ENCODE measurements at regions of chr3 and their contacts with region 1.

Region 1: DNA sequence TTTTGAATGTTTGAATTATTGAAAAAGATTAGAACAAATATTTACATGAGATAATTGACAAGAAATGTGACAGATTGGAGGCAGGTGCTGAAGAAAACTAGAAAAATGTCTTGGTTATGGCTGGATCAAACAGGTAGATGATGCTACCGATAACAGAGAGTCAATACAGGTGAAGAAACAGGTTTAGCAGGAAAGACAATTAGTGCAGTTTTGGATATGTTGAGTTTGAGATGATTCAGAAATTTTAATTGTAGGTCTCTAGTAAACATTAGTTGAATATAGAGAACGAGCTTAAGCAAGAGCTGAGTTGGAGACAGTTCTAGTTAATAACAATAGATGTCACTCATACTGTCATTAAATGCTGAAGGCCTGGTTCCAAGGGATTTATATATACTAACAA is 524.4 kb downstream of the NSUN3 start:
- DNase-seq: peak; percentile 29 to 67
- H3K4me3 ChIP-seq: no peak overlapping the region
- H3K4me3 Mint-ChIP-seq: peak overlapping the region; percentile 3
- H3K27ac Mint-ChIP-seq: peak overlapping the region; percentile 87
- H3K4me1 ChIP-seq: peaks cover 25% of the 10 kb centered on the region
- H3K4me1 Mint-ChIP-seq: peaks cover 29% of the 10 kb centered on the region
- H3K27me3 ChIP-seq: no peaks in the 10 kb centered on the region
- H3K27me3 Mint-ChIP-seq: no peaks in the 10 kb centered on the region
- CTCF ChIP-seq: no peak

Region 2: GRCh38 chr3:94305835-94306611 is 281.2 kb before region 1 on chr3:
- CTCF ChIA-PET with region 1: no interaction called
- POLR2A ChIA-PET with region 1: no interaction called
- intact Hi-C with region 1: loop called (anchors 1 kb)
- DNase-seq: peak; percentile 54 to 68
- H3K4me3 ChIP-seq: no peak overlapping the region
- H3K4me3 Mint-ChIP-seq: peak overlapping the region; percentile 46
- H3K27ac Mint-ChIP-seq: peak overlapping the region; percentile 28
- H3K4me1 ChIP-seq: peaks cover 29% of the 10 kb centered on the region
- H3K4me1 Mint-ChIP-seq: peaks cover 6% of the 10 kb centered on the region
- H3K27me3 ChIP-seq: no peaks in the 10 kb centered on the region
- H3K27me3 Mint-ChIP-seq: no peaks in the 10 kb centered on the region
- CTCF ChIP-seq: no peak

Region 3: DNA sequence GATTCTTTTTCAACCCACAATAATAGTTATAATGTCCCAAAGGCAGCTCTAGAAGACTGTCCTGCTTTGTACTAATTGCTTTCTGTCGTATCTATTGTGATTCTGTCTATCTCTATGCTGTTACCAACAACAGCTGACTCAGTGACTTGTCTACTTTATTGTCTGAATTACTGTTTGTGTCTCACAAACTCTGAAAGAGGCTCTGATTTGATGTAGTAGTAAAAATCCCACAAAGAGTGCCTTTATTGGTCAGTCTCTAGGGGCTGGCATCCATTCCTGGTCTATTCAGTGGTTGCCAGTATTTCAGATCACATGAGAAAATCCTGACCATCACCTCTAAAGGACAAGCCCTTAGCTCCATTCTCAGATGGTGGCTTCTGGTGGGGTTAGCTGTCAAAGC is 270.2 kb before region 1 on chr3:
- CTCF ChIA-PET with region 1: no interaction called
- POLR2A ChIA-PET with region 1: no interaction called
- intact Hi-C with region 1: no loop called
- DNase-seq: no peak
- H3K4me3 ChIP-seq: no peak overlapping the region
- H3K4me3 Mint-ChIP-seq: no peak overlapping the region
- H3K27ac Mint-ChIP-seq: no peak overlapping the region
- H3K4me1 ChIP-seq: no peaks in the 10 kb centered on the region
- H3K4me1 Mint-ChIP-seq: no peaks in the 10 kb centered on the region
- H3K27me3 ChIP-seq: no peaks in the 10 kb centered on the region
- H3K27me3 Mint-ChIP-seq: no peaks in the 10 kb centered on the region
- CTCF ChIP-seq: no peak

Region 4: GRCh38 chr3:94440767-94441493 is 146.3 kb before region 1 on chr3:
- CTCF ChIA-PET with region 1: no interaction called
- POLR2A ChIA-PET with region 1: no interaction called
- intact Hi-C with region 1: loop called (anchors 1 kb)
- DNase-seq: peak in 1 of 2 experiments; percentile 4
- H3K4me3 ChIP-seq: no peak overlapping the region
- H3K4me3 Mint-ChIP-seq: no peak overlapping the region
- H3K27ac Mint-ChIP-seq: peak overlapping the region; percentile 78
- H3K4me1 ChIP-seq: peaks cover 48% of the 10 kb centered on the region
- H3K4me1 Mint-ChIP-seq: peaks cover 19% of the 10 kb centered on the region
- H3K27me3 ChIP-seq: no peaks in the 10 kb centered on the region
- H3K27me3 Mint-ChIP-seq: no peaks in the 10 kb centered on the region
- CTCF ChIP-seq: no peak

Region 5: GRCh38 chr3:94544131-94544655 is 43.1 kb before region 1 on chr3:
- CTCF ChIA-PET with region 1: no interaction called
- POLR2A ChIA-PET with region 1: no interaction called
- intact Hi-C with region 1: loop called (anchors 1 kb)
- DNase-seq: peak in 1 of 2 experiments; percentile 29
- H3K4me3 ChIP-seq: no peak overlapping the region
- H3K4me3 Mint-ChIP-seq: peak overlapping the region; percentile 45
- H3K27ac Mint-ChIP-seq: peak overlapping the region; percentile 66
- H3K4me1 ChIP-seq: peaks cover 30% of the 10 kb centered on the region
- H3K4me1 Mint-ChIP-seq: peaks cover 20% of the 10 kb centered on the region
- H3K27me3 ChIP-seq: no peaks in the 10 kb centered on the region
- H3K27me3 Mint-ChIP-seq: no peaks in the 10 kb centered on the region
- CTCF ChIP-seq: no peak

Region 6: GRCh38 chr3:94616821-94617220 is 29.6 kb after region 1 on chr3:
- CTCF ChIA-PET with region 1: no interaction called
- POLR2A ChIA-PET with region 1: no interaction called
- intact Hi-C with region 1: loop called (anchors 2 kb)
- DNase-seq: peak in 1 of 2 experiments; percentile 11
- H3K4me3 ChIP-seq: no peak overlapping the region
- H3K4me3 Mint-ChIP-seq: no peak overlapping the region
- H3K27ac Mint-ChIP-seq: peak overlapping the region; percentile 26
- H3K4me1 ChIP-seq: peaks cover 13% of the 10 kb centered on the region; the same call in 1 of the 2 replicates
- H3K4me1 Mint-ChIP-seq: peaks cover 16% of the 10 kb centered on the region
- H3K27me3 ChIP-seq: no peaks in the 10 kb centered on the region
- H3K27me3 Mint-ChIP-seq: no peaks in the 10 kb centered on the region
- CTCF ChIP-seq: no peak

Region 7: GRCh38 chr3:94875149-94875548 is 287.9 kb after region 1 on chr3:
- CTCF ChIA-PET with region 1: no interaction called
- POLR2A ChIA-PET with region 1: no interaction called
- intact Hi-C with region 1: no loop called
- DNase-seq: no peak
- H3K4me3 ChIP-seq: no peak overlapping the region
- H3K4me3 Mint-ChIP-seq: no peak overlapping the region
- H3K27ac Mint-ChIP-seq: no peak overlapping the region
- H3K4me1 ChIP-seq: no peaks in the 10 kb centered on the region
- H3K4me1 Mint-ChIP-seq: no peaks in the 10 kb centered on the region
- H3K27me3 ChIP-seq: no peaks in the 10 kb centered on the region
- H3K27me3 Mint-ChIP-seq: no peaks in the 10 kb centered on the region
- CTCF ChIP-seq: no peak

Region 8: GRCh38 chr3:94961446-94962080 is 374.3 kb after region 1 on chr3:
- CTCF ChIA-PET with region 1: no interaction called
- POLR2A ChIA-PET with region 1: no interaction called
- intact Hi-C with region 1: loop called (anchors 1 kb)
- DNase-seq: peak; percentile 70 to 76
- H3K4me3 ChIP-seq: no peak overlapping the region
- H3K4me3 Mint-ChIP-seq: peak overlapping the region; percentile 9
- H3K27ac Mint-ChIP-seq: peak overlapping the region; percentile 67
- H3K4me1 ChIP-seq: peaks cover 32% of the 10 kb centered on the region
- H3K4me1 Mint-ChIP-seq: peaks cover 10% of the 10 kb centered on the region
- H3K27me3 ChIP-seq: no peaks in the 10 kb centered on the region
- H3K27me3 Mint-ChIP-seq: no peaks in the 10 kb centered on the region
- CTCF ChIP-seq: no peak

Measured in Caco-2 (cell line).